Motor neuron (in vitro differentiated cells): ENCODE measurements at regions of chr2 and their contacts with region 1.

Region 1: DNA sequence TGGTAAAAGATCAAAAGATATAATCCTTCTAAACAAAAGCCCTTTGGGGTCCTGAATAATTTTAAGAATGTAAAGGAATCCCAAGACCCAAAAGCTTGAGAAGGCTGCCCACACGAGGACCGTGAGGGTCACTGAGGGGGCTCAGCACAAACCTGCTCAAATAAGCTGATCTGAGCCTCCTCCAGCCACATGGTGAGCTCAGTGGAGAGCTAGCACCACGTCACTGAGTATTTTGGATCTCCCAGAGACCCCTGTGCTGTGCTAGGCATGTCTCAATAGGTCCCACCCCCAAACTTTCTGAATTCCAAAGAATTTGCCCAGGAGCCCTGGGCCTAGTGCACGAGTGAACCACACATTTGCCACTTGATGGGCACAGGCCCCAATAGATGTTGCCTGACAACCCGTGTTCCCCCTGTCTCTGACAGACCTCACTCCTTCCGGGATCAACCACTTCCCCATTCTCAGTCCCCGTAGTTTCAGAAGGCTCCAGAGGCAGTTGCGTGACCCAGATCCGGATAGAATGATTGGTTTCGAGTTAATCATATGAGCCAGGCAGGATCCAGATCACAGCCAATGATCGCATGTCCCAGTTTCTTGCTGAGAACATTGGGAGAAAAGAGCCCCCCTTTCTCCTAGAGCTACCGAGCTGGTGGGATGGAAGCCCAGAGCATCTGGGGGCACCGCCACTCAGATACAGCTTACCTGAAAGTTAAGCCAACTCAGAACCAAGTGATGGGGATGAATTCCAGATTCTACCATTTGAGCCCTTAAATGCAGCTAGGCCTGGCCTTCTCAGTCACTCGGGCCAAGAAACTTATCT is 203.8 kb downstream of the TNS1 start:
- ATAC-seq: no peak
- H3K4me3 ChIP-seq: no peak overlapping the region
- H3K27ac ChIP-seq: no peak overlapping the region
- H3K4me1 ChIP-seq: peaks cover 13 to 17% of the 10 kb centered on the region in 2 donors

Region 2: DNA sequence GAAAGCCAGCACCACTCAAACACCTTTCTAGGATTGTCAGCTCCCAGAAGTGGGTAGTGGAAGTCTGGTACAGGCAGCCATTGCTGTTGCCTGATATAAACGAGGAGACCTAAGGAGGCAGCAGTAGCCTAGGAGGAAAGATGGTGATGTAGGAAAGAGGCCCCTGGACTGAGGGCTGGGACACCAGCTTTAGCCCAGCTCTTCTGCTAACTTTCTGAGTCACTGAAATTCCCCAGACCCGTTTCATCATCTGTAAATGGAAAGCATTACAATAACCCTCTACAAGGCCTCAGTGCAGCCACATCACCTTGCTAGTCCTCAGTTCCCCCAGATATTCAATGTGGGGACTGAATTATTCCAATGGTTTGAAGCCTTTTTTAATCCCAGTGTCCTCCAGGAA is 132.6 kb before region 1 on chr2:
- in situ Hi-C with region 1: no loop called
- ATAC-seq: peak in 2 of 8 experiments; percentile 42 to 52
- H3K4me3 ChIP-seq: no peak overlapping the region
- H3K27ac ChIP-seq: no peak overlapping the region
- H3K4me1 ChIP-seq: no peaks in the 10 kb centered on the region

Region 3: GRCh38 chr2:217886720-217887309 is 87.9 kb after region 1 on chr2:
- in situ Hi-C with region 1: loop called in 6 of 9 experiments (anchors 10 to 25 kb)
- ATAC-seq: peak; percentile 11 to 87 (median 69)
- H3K4me3 ChIP-seq: no peak overlapping the region
- H3K27ac ChIP-seq: no peak overlapping the region
- H3K4me1 ChIP-seq: no peaks in the 10 kb centered on the region

Region 4: DNA sequence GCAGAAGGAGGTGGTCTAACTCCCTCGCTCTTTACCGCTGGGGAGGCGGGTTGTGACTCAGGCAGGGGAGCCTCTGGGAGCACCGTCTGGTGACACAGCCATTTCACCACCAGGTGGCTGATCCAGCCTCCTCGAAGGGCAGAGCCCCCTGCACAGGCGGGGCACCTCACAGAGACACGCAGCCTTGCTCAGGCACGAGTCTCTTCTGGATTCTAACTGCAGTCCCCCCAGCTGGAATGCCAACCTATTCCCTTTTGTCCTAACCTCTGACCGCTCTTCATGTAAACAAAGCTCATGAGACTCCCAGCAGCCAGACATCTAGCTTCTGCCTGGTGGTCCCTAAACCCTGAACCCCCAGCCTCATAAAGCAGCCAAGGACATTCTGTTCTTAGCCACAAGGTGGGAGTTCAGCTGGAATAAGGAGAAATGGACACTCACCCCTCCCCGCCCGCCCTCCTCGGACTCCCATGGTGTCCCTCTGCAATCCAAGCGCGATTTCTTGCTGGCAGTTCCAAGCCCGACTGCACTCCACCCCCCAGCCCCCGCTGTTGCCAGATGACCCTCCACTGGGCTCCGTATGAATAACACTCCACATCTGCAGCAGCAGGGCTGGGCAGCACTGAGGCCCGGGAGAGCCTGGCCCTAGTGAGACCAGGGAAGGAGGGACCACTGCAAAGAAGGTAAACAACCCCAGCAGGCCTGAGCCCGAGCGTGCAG is 119.5 kb after region 1 on chr2:
- in situ Hi-C with region 1: no loop called
- ATAC-seq: peak; percentile 32 to 79 (median 70)
- H3K4me3 ChIP-seq: no peak overlapping the region
- H3K27ac ChIP-seq: no peak overlapping the region
- H3K4me1 ChIP-seq: peaks cover 23 to 25% of the 10 kb centered on the region in 2 donors